Activated naive CD4-positive, alpha-beta T cell treated with anti-CD3 and anti-CD28 coated beads for 36 hours (primary cell): ENCODE measurements at regions of chr1 and their contacts with region 1.

Region 1: DNA sequence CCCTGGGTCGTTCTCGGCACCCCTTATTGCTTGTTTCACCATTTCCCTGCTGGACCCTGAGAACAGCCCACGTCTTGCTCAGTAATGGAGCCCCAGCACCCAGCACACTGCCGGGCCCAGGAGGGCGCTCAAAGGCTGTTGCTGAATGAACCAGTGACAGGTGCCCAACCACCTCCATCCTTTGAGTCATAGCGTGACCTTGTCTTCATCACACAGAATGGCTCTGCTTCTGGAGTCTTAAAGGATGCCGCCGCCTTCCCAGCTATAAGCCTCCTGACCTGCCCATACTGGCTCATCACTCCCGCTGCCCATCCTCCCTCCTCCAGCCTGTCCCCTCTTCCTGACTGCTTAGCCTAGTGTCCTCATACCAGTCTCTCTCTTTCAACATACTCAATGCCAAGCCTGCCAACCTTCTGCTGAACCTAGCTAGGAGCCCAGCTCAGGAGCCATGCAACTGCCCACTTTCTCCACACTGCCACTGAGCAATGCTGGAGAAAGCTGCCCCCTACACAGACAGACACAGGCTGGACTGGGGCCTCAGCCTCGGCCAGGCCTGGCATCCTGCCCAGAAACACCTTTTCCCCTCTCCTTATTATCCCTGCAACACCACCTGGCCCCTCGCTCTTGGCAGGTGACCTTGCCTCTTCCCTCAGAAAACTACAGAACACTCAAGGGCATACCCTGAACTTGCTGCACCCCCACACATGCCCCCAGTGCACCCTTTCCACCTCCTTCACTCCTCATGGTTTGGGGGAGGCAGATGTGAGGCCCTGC is 14.1 kb downstream of the TTC39A start:
- DNase-seq: peak; percentile 45
- H3K4me3 Mint-ChIP-seq: no peak overlapping the region
- H3K27ac Mint-ChIP-seq: no peak overlapping the region
- H3K4me1 Mint-ChIP-seq: peaks cover 11% of the 10 kb centered on the region
- H3K27me3 Mint-ChIP-seq: no peaks in the 10 kb centered on the region

Region 2: DNA sequence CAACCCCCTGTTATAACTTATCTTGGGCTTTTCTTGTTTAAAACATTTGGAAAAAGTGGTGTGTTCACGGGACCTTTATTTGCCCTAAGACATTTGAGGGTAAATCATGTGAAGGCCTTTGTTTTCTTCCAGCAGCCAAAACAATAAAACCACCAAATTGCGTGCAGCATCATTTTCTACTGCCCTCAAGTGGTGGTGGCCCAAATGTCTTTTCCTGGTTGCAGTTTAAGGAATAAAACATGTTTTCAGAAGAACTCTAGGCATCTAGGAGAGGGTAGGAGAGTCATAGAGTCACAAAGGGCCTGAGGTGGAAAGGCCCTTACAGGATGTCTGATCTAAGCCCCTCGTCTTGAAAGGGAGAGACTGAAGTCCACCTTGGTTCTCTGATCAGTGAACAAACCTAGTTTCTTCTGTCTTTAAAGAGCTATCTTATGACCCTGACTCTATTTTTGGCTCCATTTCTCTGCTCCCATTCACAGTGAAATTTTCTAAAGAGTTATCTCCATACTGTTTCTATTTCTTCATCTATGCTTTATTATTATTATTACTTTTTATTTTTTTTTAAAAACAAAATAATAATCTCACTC is 218.8 kb after region 1 on chr1:
- CTCF ChIA-PET with region 1: no interaction called
- intact Hi-C with region 1: loop called (anchors 5 kb)
- DNase-seq: peak; percentile 61
- H3K4me3 Mint-ChIP-seq: no peak overlapping the region
- H3K27ac Mint-ChIP-seq: no peak overlapping the region
- H3K4me1 Mint-ChIP-seq: peaks cover 5% of the 10 kb centered on the region
- H3K27me3 Mint-ChIP-seq: no peaks in the 10 kb centered on the region